ENCODE measurements at regions of chr2 and their contacts with region 1.

Region 1: GRCh38 chr2:75676464-75676863 is 29.9 kb downstream of the MRPL19 start:
- DNase-seq: no peak
- ATAC-seq: no peak
- H3K4me3 Mint-ChIP-seq: no peak overlapping the region
- H3K27ac Mint-ChIP-seq: no peak overlapping the region
- H3K4me1 Mint-ChIP-seq: peaks cover 10% of the 10 kb centered on the region
- H3K27me3 Mint-ChIP-seq: no peaks in the 10 kb centered on the region
- CTCF ChIP-seq: no peak

Region 2: DNA sequence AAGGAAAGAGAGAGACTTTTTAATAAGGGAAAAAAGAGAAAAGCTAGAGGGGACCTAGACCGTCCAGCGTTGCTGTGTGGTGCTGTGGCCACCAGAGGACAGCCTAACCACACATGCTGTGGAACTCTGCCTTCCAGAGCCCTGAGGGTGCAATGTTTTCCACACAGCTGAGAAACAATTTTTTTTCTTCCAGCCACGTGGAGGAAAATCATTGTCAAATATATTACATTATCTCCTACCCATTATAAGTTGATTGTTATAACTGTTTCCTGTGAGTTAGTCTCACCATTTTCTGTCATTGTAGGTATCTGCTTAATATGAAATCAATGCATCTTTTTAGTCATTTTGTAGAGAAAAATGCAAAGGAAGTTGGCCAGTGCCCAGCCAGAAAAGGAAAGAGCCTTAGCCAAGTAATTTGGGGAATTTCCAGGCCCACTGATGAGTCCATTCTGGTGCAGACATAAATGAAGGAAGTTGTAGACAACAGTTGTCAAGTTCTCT is 35.8 kb before region 1 on chr2:
- CTCF ChIA-PET with region 1: interaction called, 9 read pairs
- POLR2A ChIA-PET with region 1: no interaction called
- intact Hi-C with region 1: loop called (anchors 1 kb)
- DNase-seq: peak; percentile 23
- ATAC-seq: peak; percentile 94
- H3K4me3 Mint-ChIP-seq: no peak overlapping the region
- H3K27ac Mint-ChIP-seq: no peak overlapping the region
- H3K4me1 Mint-ChIP-seq: no peaks in the 10 kb centered on the region
- H3K27me3 Mint-ChIP-seq: peaks cover 16% of the 10 kb centered on the region
- CTCF ChIP-seq: peak; percentile 79

Region 3: DNA sequence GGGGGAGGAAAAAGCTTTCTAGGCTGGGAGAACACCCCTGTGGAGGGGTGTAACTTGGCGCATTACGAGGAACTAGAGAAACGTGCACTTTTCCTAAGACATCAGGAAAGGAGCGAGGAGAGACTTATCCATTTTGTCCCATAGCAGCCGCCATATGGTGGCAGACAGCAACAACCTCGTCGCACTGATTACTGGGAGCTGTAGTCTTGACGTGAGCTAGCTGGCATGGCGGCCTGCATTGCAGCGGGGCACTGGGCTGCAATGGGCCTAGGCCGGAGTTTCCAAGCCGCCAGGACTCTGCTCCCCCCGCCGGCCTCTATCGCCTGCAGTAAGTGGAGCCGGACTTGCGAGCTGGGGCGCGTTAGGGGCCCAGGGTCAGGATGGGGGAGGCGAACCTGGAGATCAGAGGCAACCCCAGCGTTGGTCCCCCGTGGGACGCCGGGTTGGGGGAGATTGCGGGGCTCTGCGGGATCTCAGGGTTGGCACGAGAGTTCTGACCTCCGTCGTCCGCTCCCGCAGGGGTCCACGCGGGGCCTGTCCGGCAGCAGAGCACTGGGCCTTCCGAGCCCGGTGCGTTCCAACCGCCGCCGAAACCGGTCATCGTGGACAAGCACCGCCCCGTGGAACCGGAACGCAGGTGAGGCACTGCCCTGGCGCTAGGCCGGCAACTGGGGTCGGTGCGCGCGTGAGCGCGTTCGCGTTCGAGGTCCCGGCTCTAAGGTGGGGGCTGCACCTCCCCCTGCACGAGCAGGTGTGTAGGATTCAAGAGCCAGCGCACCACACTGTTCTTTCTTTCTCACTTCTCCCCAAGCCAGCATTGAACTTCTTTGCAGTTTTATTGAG is 29.7 kb before region 1 on chr2 and contains the start of gene MRPL19:
- CTCF ChIA-PET with region 1: interaction called, 5 read pairs
- POLR2A ChIA-PET with region 1: no interaction called
- intact Hi-C with region 1: loop called (anchors 1 kb)
- DNase-seq: peak; percentile 59
- ATAC-seq: peak; percentile 96
- H3K4me3 Mint-ChIP-seq: peak within 1 kb of the TSS; percentile 95
- H3K27ac Mint-ChIP-seq: peak within 1 kb of the TSS; percentile 91
- H3K4me1 Mint-ChIP-seq: peaks cover 23% of the 10 kb centered on the region
- H3K27me3 Mint-ChIP-seq: no peaks in the 10 kb centered on the region
- CTCF ChIP-seq: no peak
- total RNA-seq, gene MRPL19: 39.1 and 39.6 TPM in 2 replicates

Region 4: DNA sequence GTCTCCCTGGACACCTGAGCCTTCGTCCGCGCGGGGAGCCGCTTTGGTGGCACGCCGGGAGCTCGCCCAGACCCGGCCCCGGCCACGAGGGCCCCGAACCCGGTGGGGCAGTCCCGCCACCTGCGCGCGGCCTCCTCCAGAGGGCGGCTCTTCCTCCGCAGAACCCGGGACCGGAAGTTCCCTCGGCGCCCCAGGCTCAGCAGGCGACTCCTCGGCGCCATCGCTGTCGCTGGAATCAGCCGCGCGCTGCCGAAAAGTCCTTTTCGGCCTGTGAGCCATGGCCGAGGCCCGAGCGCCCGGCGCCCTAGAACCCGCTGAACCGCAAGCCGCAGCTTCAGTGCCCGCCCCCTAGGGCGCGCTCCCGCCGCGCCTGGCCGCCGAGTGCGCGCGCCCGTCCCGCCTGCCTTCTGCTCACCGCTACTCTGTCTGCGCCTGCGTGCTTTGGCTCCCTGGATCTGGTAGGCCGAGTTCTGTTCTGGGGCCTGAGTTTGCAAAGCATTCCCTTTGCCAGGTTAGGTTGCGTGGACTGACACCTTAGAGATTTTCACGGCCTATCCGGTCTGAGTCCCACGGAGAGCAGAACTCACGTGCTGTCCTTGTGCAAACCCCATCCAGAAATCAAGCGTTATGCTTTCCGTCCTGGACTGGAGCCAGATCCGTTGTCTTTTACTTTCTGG is 34.3 kb after region 1 on chr2 and contains the start of gene GCFC2:
- CTCF ChIA-PET with region 1: no interaction called
- POLR2A ChIA-PET with region 1: no interaction called
- intact Hi-C with region 1: loop called (anchors 2 kb)
- DNase-seq: peak; percentile 82
- ATAC-seq: peak; percentile 90
- H3K4me3 Mint-ChIP-seq: peak within 1 kb of the TSS; percentile 89
- H3K27ac Mint-ChIP-seq: peak within 1 kb of the TSS; percentile 95
- H3K4me1 Mint-ChIP-seq: peaks cover 21% of the 10 kb centered on the region
- H3K27me3 Mint-ChIP-seq: peaks cover 2% of the 10 kb centered on the region
- CTCF ChIP-seq: no peak
- total RNA-seq, gene GCFC2: 26.2 and 27.5 TPM in 2 replicates